Naive thymus-derived CD8-positive, alpha-beta T cell (primary cell): ENCODE measurements at regions of chr12 and their contacts with region 1.

Region 1: GRCh38 chr12:6851921-6852650 is at the start of gene USP5:
- DNase-seq: peak; percentile 95 to 99 (median 99)
- ATAC-seq: peak; percentile 76 to 80
- H3K4me3 Mint-ChIP-seq: peak within 1 kb of the TSS; percentile 86 to 100 (median 96)
- H3K27ac Mint-ChIP-seq: peak within 1 kb of the TSS; percentile 91 to 100 (median 99)
- H3K4me1 Mint-ChIP-seq: peaks cover 20 to 33% (median 25%) of the 10 kb centered on the region in 4 donors
- H3K27me3 Mint-ChIP-seq: no peaks in the 10 kb centered on the region
- polyA plus RNA-seq, gene USP5: 55.3 to 69.2 (median 56.7) TPM

Region 2: GRCh38 chr12:6723607-6724396 is 128.3 kb before region 1 on chr12 and contains the start of gene COPS7A:
- POLR2A ChIA-PET with region 1: interaction called, 17 read pairs
- DNase-seq: peak; percentile 73 to 98 (median 92)
- ATAC-seq: peak; percentile 85 to 90
- H3K4me3 Mint-ChIP-seq: peak within 1 kb of the TSS; percentile 74 to 99 (median 93)
- H3K27ac Mint-ChIP-seq: peak within 1 kb of the TSS; percentile 92 to 98 (median 96)
- H3K4me1 Mint-ChIP-seq: peaks cover 19 to 32% (median 24%) of the 10 kb centered on the region in 4 donors
- H3K27me3 Mint-ChIP-seq: no peaks in the 10 kb centered on the region
- polyA plus RNA-seq, gene COPS7A: 34.9 to 42.4 (median 36.2) TPM

Region 3: DNA sequence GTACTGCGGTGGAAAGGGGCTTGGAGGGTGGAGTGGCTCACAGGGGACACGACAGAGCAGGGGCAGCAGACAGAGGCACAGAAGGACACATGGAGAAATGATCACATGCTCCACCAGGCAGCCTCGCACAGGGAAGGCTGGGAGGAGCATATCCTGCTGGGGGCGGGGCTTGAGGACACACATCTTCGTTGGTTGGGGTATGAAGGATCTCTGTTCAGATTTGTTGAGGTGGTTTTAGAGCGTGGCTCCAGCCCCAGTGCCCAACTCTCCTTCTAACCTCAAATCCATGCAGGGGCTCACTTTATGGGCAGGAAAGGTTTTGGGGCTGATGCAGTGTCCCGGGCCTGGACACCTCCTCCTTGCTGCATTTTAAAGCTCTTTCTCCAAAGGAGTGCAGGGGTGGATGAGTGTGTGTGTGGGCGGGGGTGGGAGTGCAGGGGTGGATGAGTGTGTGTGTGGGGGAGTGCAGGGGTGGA is 24.6 kb before region 1 on chr12:
- POLR2A ChIA-PET with region 1: interaction called, 21 read pairs
- DNase-seq: peak in 3 of 10 donors; percentile 24 to 67 (median 34)
- ATAC-seq: no peak
- H3K4me3 Mint-ChIP-seq: peak overlapping the region; percentile 25 to 92 (median 68)
- H3K27ac Mint-ChIP-seq: peak overlapping the region in 6 of 10 donors; percentile 6 to 89 (median 46)
- H3K4me1 Mint-ChIP-seq: peaks cover 15 to 36% (median 19%) of the 10 kb centered on the region in 4 donors
- H3K27me3 Mint-ChIP-seq: peaks cover 15 to 60% (median 46%) of the 10 kb centered on the region in 5 donors

Region 4: GRCh38 chr12:6873094-6874014 is 21.3 kb after region 1 on chr12 and contains the start of gene SPSB2:
- POLR2A ChIA-PET with region 1: interaction called, 119 read pairs
- DNase-seq: peak; percentile 95 to 100 (median 98)
- ATAC-seq: peak; percentile 77 to 90
- H3K4me3 Mint-ChIP-seq: peak within 1 kb of the TSS; percentile 84 to 97 (median 90)
- H3K27ac Mint-ChIP-seq: peak within 1 kb of the TSS; percentile 80 to 95 (median 90)
- H3K4me1 Mint-ChIP-seq: peaks cover 37 to 53% (median 49%) of the 10 kb centered on the region in 4 donors
- H3K27me3 Mint-ChIP-seq: no peaks in the 10 kb centered on the region
- polyA plus RNA-seq, gene SPSB2: 10.1 to 10.6 (median 10.2) TPM

Region 5: GRCh38 chr12:6914246-6914946 is 62.3 kb after region 1 on chr12 and contains the start of gene ENO2:
- POLR2A ChIA-PET with region 1: interaction called, 17 read pairs
- DNase-seq: peak; percentile 77 to 93 (median 82)
- ATAC-seq: peak; percentile 89 to 92
- H3K4me3 Mint-ChIP-seq: peak within 1 kb of the TSS; percentile 91 to 97 (median 94)
- H3K27ac Mint-ChIP-seq: peak within 1 kb of the TSS; percentile 87 to 98 (median 95)
- H3K4me1 Mint-ChIP-seq: peaks cover 16 to 52% (median 27%) of the 10 kb centered on the region in 4 donors
- H3K27me3 Mint-ChIP-seq: no peaks in the 10 kb centered on the region
- polyA plus RNA-seq, gene ENO2: 19.4 to 29.2 (median 19.7) TPM

Region 6: DNA sequence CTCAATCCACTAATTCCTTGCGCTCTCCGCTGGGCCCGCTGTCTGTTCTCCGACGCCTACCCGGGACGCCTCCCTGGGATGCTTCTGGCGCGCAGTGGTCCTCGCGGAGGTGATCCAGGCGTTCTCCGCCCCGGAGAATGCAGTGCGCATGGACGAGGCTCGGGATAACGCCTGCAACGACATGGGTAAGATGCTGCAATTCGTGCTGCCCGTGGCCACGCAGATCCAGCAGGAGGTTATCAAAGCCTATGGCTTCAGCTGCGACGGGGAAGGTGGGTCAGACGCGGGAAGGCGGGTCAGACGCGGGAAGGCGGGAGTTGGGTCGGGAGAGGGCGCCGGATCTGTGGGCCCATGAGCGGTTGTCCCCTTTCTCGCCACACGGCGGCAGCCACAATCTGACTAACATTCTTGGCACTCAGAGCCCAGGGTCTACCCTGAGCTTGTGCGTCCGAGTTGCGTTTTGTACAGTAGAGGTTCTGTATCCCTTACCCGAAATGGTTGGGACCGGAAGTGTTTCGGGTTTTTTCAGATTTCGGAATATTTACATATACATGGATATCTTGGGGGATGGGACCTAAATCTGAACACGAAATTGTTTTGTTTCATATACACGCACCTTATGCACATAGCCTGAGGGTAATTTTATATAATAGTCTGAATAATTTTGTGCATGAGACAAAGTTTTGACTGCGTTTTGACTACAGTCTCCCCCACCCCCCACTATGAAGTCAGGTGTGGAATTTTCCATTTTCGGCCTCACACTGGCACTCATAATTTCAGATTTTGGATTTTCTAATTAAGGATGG is 92.5 kb after region 1 on chr12:
- POLR2A ChIA-PET with region 1: interaction called, 35 read pairs
- DNase-seq: peak; percentile 65 to 94 (median 84)
- ATAC-seq: peak; percentile 49 to 55
- H3K4me3 Mint-ChIP-seq: peak overlapping the region; percentile 93 to 99 (median 98)
- H3K27ac Mint-ChIP-seq: peak overlapping the region; percentile 97 to 100 (median 99)
- H3K4me1 Mint-ChIP-seq: peaks cover 32 to 78% (median 66%) of the 10 kb centered on the region in 4 donors
- H3K27me3 Mint-ChIP-seq: no peaks in the 10 kb centered on the region